Activated CD4-positive, alpha-beta T cell treated with anti-CD3 and anti-CD28 coated beads for 36 hours (primary cell): ENCODE measurements at regions of chr6 and their contacts with region 1.

Region 1: GRCh38 chr6:118843685-118844390 is 50.1 kb upstream of the ASF1A start:
- DNase-seq: peak; percentile 49
- ATAC-seq: peak; percentile 87
- H3K4me3 Mint-ChIP-seq: no peak overlapping the region
- H3K27ac Mint-ChIP-seq: peak overlapping the region; percentile 48
- H3K4me1 Mint-ChIP-seq: peaks cover 26% of the 10 kb centered on the region
- H3K27me3 Mint-ChIP-seq: no peaks in the 10 kb centered on the region

Region 2: GRCh38 chr6:118724211-118724610 is 119.6 kb before region 1 on chr6:
- CTCF ChIA-PET with region 1: no interaction called
- POLR2A ChIA-PET with region 1: no interaction called
- intact Hi-C with region 1: loop called (anchors 1 to 5 kb)
- DNase-seq: no peak
- ATAC-seq: peak; percentile 37
- H3K4me3 Mint-ChIP-seq: no peak overlapping the region
- H3K27ac Mint-ChIP-seq: peak overlapping the region; percentile 70
- H3K4me1 Mint-ChIP-seq: peaks cover 75% of the 10 kb centered on the region
- H3K27me3 Mint-ChIP-seq: no peaks in the 10 kb centered on the region

Region 3: GRCh38 chr6:118810420-118811027 is 33.3 kb before region 1 on chr6:
- CTCF ChIA-PET with region 1: no interaction called
- POLR2A ChIA-PET with region 1: no interaction called
- intact Hi-C with region 1: loop called (anchors 2 kb)
- DNase-seq: peak; percentile 77
- ATAC-seq: peak; percentile 92
- H3K4me3 Mint-ChIP-seq: no peak overlapping the region
- H3K27ac Mint-ChIP-seq: peak overlapping the region; percentile 81
- H3K4me1 Mint-ChIP-seq: peaks cover 57% of the 10 kb centered on the region
- H3K27me3 Mint-ChIP-seq: no peaks in the 10 kb centered on the region

Region 4: GRCh38 chr6:118869894-118870589 is 26.2 kb after region 1 on chr6:
- CTCF ChIA-PET with region 1: interaction called, 3 read pairs
- POLR2A ChIA-PET with region 1: no interaction called
- intact Hi-C with region 1: loop called in 1 of 2 experiments (anchors 1 kb)
- DNase-seq: no peak
- ATAC-seq: peak; percentile 16
- H3K4me3 Mint-ChIP-seq: no peak overlapping the region
- H3K27ac Mint-ChIP-seq: no peak overlapping the region
- H3K4me1 Mint-ChIP-seq: peaks cover 30% of the 10 kb centered on the region
- H3K27me3 Mint-ChIP-seq: no peaks in the 10 kb centered on the region

Region 5: DNA sequence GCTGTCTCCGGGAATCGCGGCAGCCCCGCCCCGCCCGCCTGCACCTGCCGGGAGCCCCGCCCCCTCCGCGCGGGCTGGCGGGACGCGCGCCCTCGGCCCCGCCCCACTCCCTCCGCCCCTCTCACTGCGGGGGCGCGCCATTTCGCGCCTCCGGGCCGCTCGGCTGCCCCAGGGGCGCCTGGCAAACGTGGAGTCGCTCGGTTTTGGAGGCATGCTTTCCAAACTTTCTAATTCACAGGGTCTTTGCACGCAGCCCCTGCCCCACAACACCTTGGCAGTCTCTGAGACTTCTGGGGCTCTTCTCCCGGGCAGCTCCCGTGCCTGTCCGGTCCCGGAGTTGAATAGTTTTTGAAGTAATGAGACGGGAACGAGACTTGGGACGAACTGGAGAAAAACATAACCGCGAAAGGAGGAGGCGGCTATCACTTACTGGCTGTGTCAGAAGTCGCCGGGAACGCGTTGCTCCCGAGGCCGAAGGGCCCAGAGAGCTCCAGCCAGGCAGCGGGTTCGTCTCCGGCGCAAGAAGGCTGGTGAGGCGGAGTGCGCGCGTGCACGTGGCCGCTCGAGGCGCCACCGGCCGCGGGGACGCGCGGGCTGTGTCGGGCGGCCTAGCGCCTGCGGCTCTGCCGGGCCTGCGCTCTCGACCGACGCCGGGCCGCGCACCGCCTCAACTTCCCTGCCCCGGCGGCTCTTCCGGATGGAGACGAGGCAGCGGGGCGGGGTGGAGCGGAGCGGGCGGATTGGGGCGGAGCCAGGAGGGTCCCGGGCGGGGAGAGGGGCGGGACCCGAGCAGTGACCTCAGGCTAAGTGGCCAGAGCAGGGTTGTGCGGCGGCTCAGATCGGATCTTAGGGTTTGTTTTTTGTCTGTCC is 90.9 kb after region 1 on chr6 and contains the start of gene MCM9:
- CTCF ChIA-PET with region 1: no interaction called
- POLR2A ChIA-PET with region 1: no interaction called
- intact Hi-C with region 1: loop called in 1 of 2 experiments (anchors 1 kb)
- DNase-seq: peak; percentile 94
- ATAC-seq: peak; percentile 97
- H3K4me3 Mint-ChIP-seq: peak within 1 kb of the TSS; percentile 87
- H3K27ac Mint-ChIP-seq: peak within 1 kb of the TSS; percentile 94
- H3K4me1 Mint-ChIP-seq: peaks cover 35% of the 10 kb centered on the region
- H3K27me3 Mint-ChIP-seq: no peaks in the 10 kb centered on the region
- total RNA-seq, gene MCM9: 17.0 to 17.2 TPM

Region 6: DNA sequence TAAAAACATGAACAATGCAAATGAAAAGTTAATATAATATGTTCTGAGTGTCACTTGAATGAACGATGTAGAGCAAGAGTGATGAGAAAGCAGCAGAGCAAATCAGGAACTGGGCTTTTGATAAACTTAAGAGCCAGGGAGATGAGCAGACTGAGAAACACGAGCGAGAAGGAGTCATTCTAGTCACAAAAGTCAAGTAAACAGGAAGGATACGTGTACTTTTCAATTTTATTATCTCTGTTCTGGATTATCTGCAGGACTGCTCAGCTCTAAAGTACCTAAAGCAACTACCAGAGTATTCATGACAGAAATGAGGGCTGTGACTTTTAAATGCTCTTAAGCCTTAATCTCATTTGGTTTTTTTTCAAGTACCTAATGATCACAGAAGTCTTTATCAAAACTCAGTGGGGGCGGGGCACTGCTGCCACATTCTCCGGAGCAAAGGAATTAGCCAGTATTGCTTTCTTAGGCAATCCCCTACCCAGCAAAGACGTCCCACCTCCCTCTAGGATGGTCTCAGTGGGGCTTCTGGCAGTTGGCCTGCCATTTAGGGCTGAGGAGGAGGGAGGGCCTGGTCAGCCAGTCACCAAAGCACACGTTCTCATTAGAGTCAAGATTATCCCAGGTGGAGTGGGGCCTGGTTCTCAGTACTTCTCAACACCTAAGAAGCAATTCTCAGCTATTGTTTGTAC is 497.1 kb after region 1 on chr6:
- CTCF ChIA-PET with region 1: no interaction called
- POLR2A ChIA-PET with region 1: no interaction called
- intact Hi-C with region 1: no loop called
- DNase-seq: no peak
- ATAC-seq: peak; percentile 25
- H3K4me3 Mint-ChIP-seq: no peak overlapping the region
- H3K27ac Mint-ChIP-seq: no peak overlapping the region
- H3K4me1 Mint-ChIP-seq: peaks cover 60% of the 10 kb centered on the region
- H3K27me3 Mint-ChIP-seq: no peaks in the 10 kb centered on the region